A673 (cell line): ENCODE measurements at regions of chr1 and their contacts with region 1.

Region 1: GRCh38 chr1:45303582-45304310 is 22.9 kb upstream of the HPDL start:
- DNase-seq: peak; percentile 98
- H3K4me3 ChIP-seq: peak overlapping the region; percentile 52
- H3K27ac ChIP-seq: peak overlapping the region; percentile 81
- H3K4me1 ChIP-seq: peaks cover 11% of the 10 kb centered on the region
- H3K27me3 ChIP-seq: no peaks in the 10 kb centered on the region
- CTCF ChIP-seq: peak; percentile 83

Region 2: DNA sequence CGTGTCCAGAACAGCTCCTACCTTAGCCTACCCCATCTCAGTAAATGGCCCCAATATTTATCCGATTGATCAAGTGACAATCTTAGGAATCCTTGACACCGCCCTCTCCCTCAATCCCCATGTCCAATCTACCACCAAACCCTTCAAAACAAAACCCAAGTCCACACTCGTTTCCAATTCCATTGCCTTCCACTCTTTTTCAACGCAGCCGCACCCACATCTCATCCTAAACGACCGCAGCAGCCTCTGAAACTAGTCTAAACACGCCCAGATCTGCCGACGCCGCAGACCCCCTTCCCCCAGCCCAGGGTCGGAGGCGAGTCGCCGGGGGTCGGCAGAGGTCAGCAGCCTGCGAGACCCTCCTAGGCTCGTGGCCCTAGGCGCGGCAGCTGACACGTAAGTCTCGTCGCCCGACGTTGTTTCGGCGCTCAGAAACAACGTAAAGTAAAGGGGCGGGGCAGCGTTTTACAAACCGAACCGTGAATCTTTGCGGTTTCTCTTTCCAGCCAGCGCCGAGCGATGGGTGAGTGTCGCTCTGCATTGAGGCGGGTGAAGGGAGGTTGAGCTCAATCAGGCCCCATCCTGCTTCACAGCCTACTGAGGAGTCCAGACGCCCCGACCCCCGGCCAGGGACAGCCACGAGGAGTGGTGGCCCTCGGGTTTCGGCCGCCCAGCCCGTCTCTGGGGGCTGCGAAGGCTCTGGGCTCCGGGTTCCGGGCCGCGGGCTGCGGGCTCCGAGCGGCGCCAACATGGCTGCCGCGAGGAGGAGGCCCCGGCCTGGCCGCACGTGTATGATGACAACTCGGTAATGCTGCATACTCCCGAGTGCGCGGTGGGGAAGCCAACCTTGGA is 528.4 kb before region 1 on chr1 and contains the start of gene RPS8:
- CTCF ChIA-PET with region 1: no interaction called
- POLR2A ChIA-PET with region 1: interaction called, 10 read pairs
- intact Hi-C with region 1: no loop called
- DNase-seq: peak; percentile 97
- H3K4me3 ChIP-seq: peak within 1 kb of the TSS; percentile 90
- H3K27ac ChIP-seq: peak within 1 kb of the TSS; percentile 94
- H3K4me1 ChIP-seq: peaks cover 7% of the 10 kb centered on the region
- H3K27me3 ChIP-seq: no peaks in the 10 kb centered on the region
- CTCF ChIP-seq: no peak
- total RNA-seq, gene RPS8: 1,717 and 1,734 TPM in 2 replicates

Region 3: GRCh38 chr1:44835738-44836675 is 467.7 kb before region 1 on chr1:
- CTCF ChIA-PET with region 1: no interaction called
- POLR2A ChIA-PET with region 1: no interaction called
- intact Hi-C with region 1: loop called (anchors 5 kb)
- DNase-seq: peak; percentile 82
- H3K4me3 ChIP-seq: no peak overlapping the region
- H3K27ac ChIP-seq: no peak overlapping the region
- H3K4me1 ChIP-seq: peaks cover 8% of the 10 kb centered on the region
- H3K27me3 ChIP-seq: no peaks in the 10 kb centered on the region
- CTCF ChIP-seq: peak; percentile 93

Region 4: GRCh38 chr1:45018599-45019230 is 285.0 kb before region 1 on chr1:
- CTCF ChIA-PET with region 1: interaction called, 9 read pairs
- POLR2A ChIA-PET with region 1: no interaction called
- intact Hi-C with region 1: loop called (anchors 1 kb)
- DNase-seq: peak; percentile 65
- H3K4me3 ChIP-seq: no peak overlapping the region
- H3K27ac ChIP-seq: no peak overlapping the region
- H3K4me1 ChIP-seq: no peaks in the 10 kb centered on the region
- H3K27me3 ChIP-seq: no peaks in the 10 kb centered on the region
- CTCF ChIP-seq: peak; percentile 85

Region 5: DNA sequence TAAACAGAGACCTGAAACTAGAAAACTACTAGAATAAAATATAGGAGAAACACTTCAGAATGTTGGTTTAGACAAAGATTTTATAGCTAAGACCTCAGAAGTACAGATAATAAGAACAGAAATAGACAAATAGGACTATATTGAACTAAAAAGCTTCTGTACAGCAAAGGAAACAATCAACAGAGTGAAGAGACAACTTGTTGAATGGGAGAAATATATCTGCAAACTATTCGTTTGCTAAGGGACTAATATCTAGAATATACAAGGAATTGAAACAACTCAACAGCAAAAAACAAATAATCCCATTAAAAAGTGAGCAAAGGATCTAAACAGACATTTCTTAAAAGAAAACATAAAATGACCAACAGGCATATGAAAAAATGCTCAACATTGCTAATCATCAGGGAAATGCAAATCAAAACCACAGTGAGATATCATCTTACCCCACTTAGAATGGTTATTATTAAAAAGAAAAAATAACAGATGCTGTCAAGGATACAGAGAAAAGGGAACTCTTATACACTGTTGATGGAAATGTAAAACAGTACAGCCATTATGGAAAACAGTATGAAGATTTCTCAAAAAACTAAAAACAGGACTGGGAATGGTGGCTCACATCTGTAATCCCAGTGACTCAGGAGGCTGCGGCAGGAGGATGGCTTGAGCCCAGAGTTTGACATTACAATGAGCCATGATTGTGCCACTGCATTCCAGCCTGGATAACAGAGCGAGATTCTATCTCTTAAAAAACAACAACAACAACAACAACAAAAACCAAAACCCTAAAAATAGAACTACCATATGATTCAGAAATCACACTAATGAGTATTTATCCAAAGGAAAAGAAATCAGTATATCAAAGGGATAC is 60.0 kb before region 1 on chr1:
- CTCF ChIA-PET with region 1: no interaction called
- POLR2A ChIA-PET with region 1: no interaction called
- intact Hi-C with region 1: no loop called
- DNase-seq: no peak
- H3K4me3 ChIP-seq: no peak overlapping the region
- H3K27ac ChIP-seq: no peak overlapping the region
- H3K4me1 ChIP-seq: no peaks in the 10 kb centered on the region
- H3K27me3 ChIP-seq: no peaks in the 10 kb centered on the region
- CTCF ChIP-seq: no peak

Region 6: GRCh38 chr1:45272983-45273382 is 30.8 kb before region 1 on chr1:
- CTCF ChIA-PET with region 1: no interaction called
- POLR2A ChIA-PET with region 1: interaction called, 15 read pairs
- intact Hi-C with region 1: no loop called
- DNase-seq: no peak
- H3K4me3 ChIP-seq: no peak overlapping the region
- H3K27ac ChIP-seq: no peak overlapping the region
- H3K4me1 ChIP-seq: no peaks in the 10 kb centered on the region
- H3K27me3 ChIP-seq: no peaks in the 10 kb centered on the region
- CTCF ChIP-seq: no peak

Region 7: GRCh38 chr1:45490626-45491486 is 187.1 kb after region 1 on chr1 and contains the start of gene TESK2:
- CTCF ChIA-PET with region 1: no interaction called
- POLR2A ChIA-PET with region 1: no interaction called
- intact Hi-C with region 1: loop called (anchors 5 kb)
- DNase-seq: peak; percentile 99
- H3K4me3 ChIP-seq: peak within 1 kb of the TSS; percentile 56
- H3K27ac ChIP-seq: no peak within 1 kb of the TSS
- H3K4me1 ChIP-seq: peaks cover 3% of the 10 kb centered on the region
- H3K27me3 ChIP-seq: peaks cover 16% of the 10 kb centered on the region
- CTCF ChIP-seq: no peak
- total RNA-seq, gene TESK2: 0.75 and 2.7 TPM in 2 replicates

Region 8: GRCh38 chr1:45583264-45583665 is 279.5 kb after region 1 on chr1:
- CTCF ChIA-PET with region 1: interaction called, 10 read pairs
- POLR2A ChIA-PET with region 1: no interaction called
- intact Hi-C with region 1: no loop called
- DNase-seq: peak; percentile 98
- H3K4me3 ChIP-seq: peak overlapping the region; percentile 93
- H3K27ac ChIP-seq: peak overlapping the region; percentile 99
- H3K4me1 ChIP-seq: peaks cover 11% of the 10 kb centered on the region
- H3K27me3 ChIP-seq: no peaks in the 10 kb centered on the region
- CTCF ChIP-seq: no peak